Common myeloid progenitor, CD34-positive (primary cell): ENCODE measurements at regions of chr11 and their contacts with region 1.

Region 1: GRCh38 chr11:15074206-15075161 is 1.1 kb downstream of the CALCB start:
- DNase-seq: peak; percentile 65 to 80 (median 80)
- H3K4me3 ChIP-seq: peak overlapping the region in 2 of 7 experiments; percentile 19 to 39
- H3K27ac ChIP-seq: no peak overlapping the region
- H3K4me1 ChIP-seq: peaks cover 0 to 20% (median 20%) of the 10 kb centered on the region in 4 experiments
- H3K27me3 ChIP-seq: peaks cover 0 to 56% (median 23%) of the 10 kb centered on the region in 5 experiments

Region 2: GRCh38 chr11:14789879-14790484 is 284.5 kb before region 1 on chr11:
- CTCF ChIA-PET with region 1: interaction called, 31 read pairs
- POLR2A ChIA-PET with region 1: no interaction called
- DNase-seq: peak; percentile 21 to 57 (median 48)
- H3K4me3 ChIP-seq: no peak overlapping the region
- H3K27ac ChIP-seq: no peak overlapping the region
- H3K4me1 ChIP-seq: no peaks in the 10 kb centered on the region
- H3K27me3 ChIP-seq: peaks cover 0 to 12% (median 7%) of the 10 kb centered on the region in 5 experiments

Region 3: GRCh38 chr11:15195454-15196200 is 121.1 kb after region 1 on chr11:
- CTCF ChIA-PET with region 1: no interaction called
- POLR2A ChIA-PET with region 1: no interaction called
- DNase-seq: no peak
- H3K4me3 ChIP-seq: no peak overlapping the region
- H3K27ac ChIP-seq: no peak overlapping the region
- H3K4me1 ChIP-seq: no peaks in the 10 kb centered on the region
- H3K27me3 ChIP-seq: peaks cover 0 to 7% (median 0%) of the 10 kb centered on the region in 5 experiments